Tibial artery (tissue), 4 donors: ENCODE measurements at regions of chr4 and their contacts with region 1.

Region 1: GRCh38 chr4:153750197-153750817 is 9.5 kb downstream of the RNF175 start:
- DNase-seq: peak; percentile 63 to 77
- H3K4me3 ChIP-seq: no peak overlapping the region
- H3K27ac ChIP-seq: no peak overlapping the region
- H3K4me1 ChIP-seq: peaks cover 0 to 13% (median 0%) of the 10 kb centered on the region in 4 donors
- H3K27me3 ChIP-seq: no peaks in the 10 kb centered on the region
- CTCF ChIP-seq: peak; percentile 71 to 83

Region 2: DNA sequence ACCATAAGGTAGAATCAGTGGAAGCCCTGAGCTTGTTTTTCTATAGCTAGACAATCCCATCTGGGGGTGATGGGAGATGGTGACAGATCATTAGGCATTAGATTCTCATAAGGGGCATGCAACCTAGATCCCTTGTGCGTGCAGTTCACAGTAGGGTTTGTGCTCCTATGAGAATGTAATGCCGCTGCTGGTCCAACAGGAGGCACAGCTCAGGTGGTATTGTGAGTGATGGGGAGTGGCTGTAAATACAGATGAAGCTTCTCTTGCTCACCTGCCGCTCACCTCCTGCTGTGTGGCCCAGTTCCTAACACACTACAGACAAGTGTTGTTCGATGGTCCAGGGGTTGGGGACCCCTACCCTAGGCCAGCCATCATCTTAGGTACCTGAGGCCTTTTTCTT is 1983.6 kb before region 1 on chr4:
- intact Hi-C with region 1: loop called (anchors 5 kb)
- DNase-seq: no peak
- H3K4me3 ChIP-seq: no peak overlapping the region
- H3K27ac ChIP-seq: no peak overlapping the region
- H3K4me1 ChIP-seq: no peaks in the 10 kb centered on the region
- H3K27me3 ChIP-seq: no peaks in the 10 kb centered on the region
- CTCF ChIP-seq: no peak

Region 3: DNA sequence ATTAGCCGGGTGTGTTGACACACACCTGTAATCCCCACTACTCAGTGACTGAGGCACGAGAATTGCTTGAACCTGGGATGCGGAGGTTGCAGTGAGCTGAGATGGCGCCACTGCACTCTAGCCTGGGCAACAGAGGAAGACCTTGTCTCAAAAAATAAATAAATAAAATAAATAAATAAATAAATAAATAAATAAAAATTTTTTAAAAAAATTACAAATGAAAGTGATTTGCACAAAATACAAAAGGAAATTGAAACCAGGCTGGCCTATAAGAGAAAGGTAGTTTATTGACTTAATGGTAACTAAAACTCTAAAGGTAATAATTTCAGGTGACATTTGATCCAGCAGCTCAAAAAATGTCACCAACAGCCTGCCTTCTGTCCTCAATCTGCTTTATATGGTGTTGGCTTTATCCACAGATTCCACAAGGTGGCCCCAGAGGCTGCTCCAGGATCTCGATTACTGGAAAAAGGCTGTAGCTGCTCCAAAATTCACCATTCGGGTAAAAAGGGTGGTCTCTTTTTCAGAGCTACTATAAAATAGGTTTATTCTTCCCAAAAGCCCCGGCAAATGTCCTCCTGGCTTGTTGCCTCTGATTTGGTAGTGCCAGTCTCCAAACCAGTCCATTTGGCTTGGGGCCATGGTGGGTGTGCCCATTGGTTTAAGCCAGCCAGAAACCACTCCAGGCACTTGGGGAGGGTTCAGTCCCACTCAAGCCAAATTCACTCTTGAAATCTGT is 607.4 kb before region 1 on chr4:
- intact Hi-C with region 1: loop called (anchors 5 kb)
- DNase-seq: peak; percentile 65 to 80
- H3K4me3 ChIP-seq: peak overlapping the region in 1 of 2 donors; percentile 21
- H3K27ac ChIP-seq: no peak overlapping the region
- H3K4me1 ChIP-seq: peaks cover 0 to 3% (median 1%) of the 10 kb centered on the region in 4 donors
- H3K27me3 ChIP-seq: no peaks in the 10 kb centered on the region
- CTCF ChIP-seq: peak; percentile 90 to 91

Region 4: DNA sequence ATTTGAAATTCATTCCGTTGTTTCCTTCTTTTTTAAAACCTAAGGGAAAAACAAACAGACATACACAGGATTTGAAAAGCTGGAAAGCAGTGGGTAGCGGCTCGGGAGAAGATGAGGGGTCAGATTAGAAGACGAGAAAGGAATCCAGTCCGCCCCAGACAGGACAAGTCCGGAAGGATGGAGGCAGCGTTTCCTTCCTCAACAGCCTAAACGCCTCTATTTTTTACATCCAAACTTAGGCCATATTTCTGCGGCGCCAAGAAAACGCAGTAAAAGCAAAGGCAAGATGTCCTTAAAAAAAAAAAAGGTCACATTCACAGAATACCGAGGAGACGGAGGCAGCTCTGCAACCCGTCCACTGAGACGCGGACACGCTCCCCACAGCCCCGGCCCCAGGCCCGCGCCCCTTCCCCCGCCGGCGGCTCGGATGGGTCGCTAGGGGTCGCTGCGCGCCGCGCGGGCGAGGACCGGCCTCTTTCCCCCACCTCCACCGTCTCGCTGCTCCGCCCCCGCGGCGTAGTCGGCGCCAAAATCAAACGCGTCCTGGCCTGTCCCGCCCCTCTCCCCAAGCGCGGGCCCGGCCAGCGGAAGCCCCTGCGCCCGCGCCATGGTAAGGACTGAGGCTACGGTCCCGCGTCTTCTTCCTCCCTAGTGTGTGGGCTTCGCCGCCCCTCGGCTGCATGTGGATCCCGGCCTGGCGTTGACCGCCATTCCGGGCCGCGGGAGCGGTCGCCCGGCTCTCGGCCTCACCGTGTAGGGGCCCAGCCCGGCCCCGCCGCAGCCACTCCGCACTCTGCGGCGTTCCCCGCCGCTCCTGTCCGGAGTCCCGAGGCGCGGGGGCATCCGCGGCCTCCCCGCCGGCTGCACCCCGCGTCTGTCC is 405.9 kb before region 1 on chr4 and contains the start of gene MND1:
- intact Hi-C with region 1: loop called (anchors 2 kb)
- DNase-seq: peak; percentile 81 to 90
- H3K4me3 ChIP-seq: peak within 1 kb of the TSS; percentile 77 to 81
- H3K27ac ChIP-seq: peak within 1 kb of the TSS; percentile 50
- H3K4me1 ChIP-seq: peaks cover 0 to 30% (median 0%) of the 10 kb centered on the region in 4 donors
- H3K27me3 ChIP-seq: no peaks in the 10 kb centered on the region
- CTCF ChIP-seq: peak; percentile 83 to 99

Region 5: GRCh38 chr4:153432968-153433753 is 317.1 kb before region 1 on chr4:
- intact Hi-C with region 1: no loop called
- DNase-seq: peak; percentile 55 to 76
- H3K4me3 ChIP-seq: no peak overlapping the region
- H3K27ac ChIP-seq: peak overlapping the region; percentile 29 to 79
- H3K4me1 ChIP-seq: peaks cover 0 to 44% (median 16%) of the 10 kb centered on the region in 4 donors
- H3K27me3 ChIP-seq: no peaks in the 10 kb centered on the region
- CTCF ChIP-seq: peak; percentile 45 to 47

Region 6: GRCh38 chr4:153634738-153635353 is 115.5 kb before region 1 on chr4:
- intact Hi-C with region 1: loop called (anchors 5 kb)
- DNase-seq: no peak
- H3K4me3 ChIP-seq: no peak overlapping the region
- H3K27ac ChIP-seq: peak overlapping the region in 1 of 2 donors; percentile 10
- H3K4me1 ChIP-seq: no peaks in the 10 kb centered on the region
- H3K27me3 ChIP-seq: no peaks in the 10 kb centered on the region
- CTCF ChIP-seq: peak; percentile 65 to 85

Region 7: DNA sequence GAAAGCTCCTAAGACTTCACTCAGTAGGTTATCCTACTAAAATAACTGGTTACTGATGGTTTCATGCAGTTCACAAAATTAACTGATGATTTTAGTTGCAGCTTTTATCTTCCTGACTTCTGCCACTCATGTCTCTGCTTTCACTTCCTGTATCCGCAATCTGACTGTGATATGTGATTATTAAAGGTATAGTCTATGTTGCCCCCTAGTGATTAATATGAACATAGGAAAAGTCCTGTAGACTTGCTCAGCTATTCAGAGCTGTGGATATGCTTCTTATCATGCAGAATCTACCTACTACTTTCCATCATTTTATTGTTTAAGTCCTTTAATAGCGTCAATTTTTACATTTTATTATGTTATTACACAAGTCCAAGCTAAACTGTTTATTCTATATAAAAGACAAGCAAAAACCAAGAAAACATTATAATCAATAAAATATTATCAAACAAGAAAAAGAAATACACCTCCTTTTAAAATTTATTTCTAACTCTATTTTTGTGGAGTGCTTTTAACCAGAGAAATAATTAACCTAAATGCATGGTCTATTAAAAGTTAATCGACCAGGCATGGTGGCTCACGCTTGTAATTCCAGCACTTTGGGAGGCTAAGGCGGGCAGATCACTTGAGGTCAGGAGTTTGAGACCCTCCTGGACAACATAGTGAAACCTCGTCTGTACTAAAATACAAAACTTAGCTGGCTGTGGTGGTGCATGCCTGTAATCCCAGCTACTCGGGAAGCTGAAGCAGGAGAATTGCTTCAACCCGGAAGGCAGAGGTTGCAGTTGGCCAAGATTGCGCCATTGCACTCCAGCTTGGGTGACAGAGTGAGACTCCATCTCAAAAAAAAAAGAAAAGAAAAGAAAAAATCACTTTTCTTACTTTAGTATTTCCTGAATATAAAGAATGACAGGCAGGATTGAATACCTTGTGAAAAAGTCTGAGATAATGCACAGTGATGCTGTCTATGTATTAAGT is 106.6 kb before region 1 on chr4:
- intact Hi-C with region 1: loop called (anchors 5 kb)
- DNase-seq: no peak
- H3K4me3 ChIP-seq: no peak overlapping the region
- H3K27ac ChIP-seq: no peak overlapping the region
- H3K4me1 ChIP-seq: peaks cover 0 to 30% (median 9%) of the 10 kb centered on the region in 4 donors
- H3K27me3 ChIP-seq: no peaks in the 10 kb centered on the region
- CTCF ChIP-seq: peak; percentile 47 to 51